GM23248 (cell line): ENCODE measurements at regions of chr14 and their contacts with region 1.

Region 1: GRCh38 chr14:66507722-66508546 is at the start of gene GPHN:
- DNase-seq: peak; percentile 99
- H3K4me3 ChIP-seq: peak within 1 kb of the TSS; percentile 93
- H3K27ac ChIP-seq: peak within 1 kb of the TSS; percentile 60
- H3K4me1 ChIP-seq: no peaks in the 10 kb centered on the region
- H3K27me3 ChIP-seq: no peaks in the 10 kb centered on the region
- total RNA-seq, gene GPHN: 7.0 and 7.6 TPM in 2 replicates

Region 2: GRCh38 chr14:67010602-67011001 is 502.7 kb after region 1 on chr14:
- in situ Hi-C with region 1: no loop called
- DNase-seq: no peak
- H3K4me3 ChIP-seq: no peak overlapping the region
- H3K27ac ChIP-seq: no peak overlapping the region
- H3K4me1 ChIP-seq: no peaks in the 10 kb centered on the region
- H3K27me3 ChIP-seq: no peaks in the 10 kb centered on the region

Region 3: DNA sequence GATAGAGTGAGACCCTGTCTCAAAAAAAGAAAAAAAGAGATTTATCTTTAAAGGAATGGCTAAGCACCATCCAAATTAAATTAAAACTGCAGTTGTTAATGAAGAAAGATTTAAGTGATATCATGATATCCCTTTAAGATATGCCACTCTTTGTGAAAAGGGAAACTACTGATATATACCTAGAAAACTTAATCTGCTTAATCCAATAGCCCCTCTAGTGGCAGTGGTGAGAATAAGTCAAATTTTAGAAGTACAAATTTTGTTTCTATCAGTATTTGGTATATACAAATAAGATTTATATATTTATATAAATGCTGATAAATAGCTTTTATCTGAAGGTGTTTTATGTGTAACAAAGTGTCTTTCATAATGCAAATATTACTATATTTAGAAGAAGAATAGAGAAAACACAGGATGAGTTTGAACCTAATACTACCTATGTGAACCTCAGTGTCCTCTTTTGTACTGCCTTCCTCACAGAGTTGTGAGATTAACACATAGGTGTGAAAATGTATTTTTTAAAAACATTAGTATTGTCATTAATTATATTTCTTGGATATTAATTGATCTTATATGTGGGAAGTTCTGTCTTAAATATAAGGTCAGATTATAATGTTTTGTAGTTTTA is 629.9 kb after region 1 on chr14:
- in situ Hi-C with region 1: loop called (anchors 10 kb)
- DNase-seq: peak; percentile 49
- H3K4me3 ChIP-seq: no peak overlapping the region
- H3K27ac ChIP-seq: no peak overlapping the region
- H3K4me1 ChIP-seq: no peaks in the 10 kb centered on the region
- H3K27me3 ChIP-seq: no peaks in the 10 kb centered on the region